Caco-2 (cell line): ENCODE measurements at regions of chr10 and their contacts with region 1.

Region 1: DNA sequence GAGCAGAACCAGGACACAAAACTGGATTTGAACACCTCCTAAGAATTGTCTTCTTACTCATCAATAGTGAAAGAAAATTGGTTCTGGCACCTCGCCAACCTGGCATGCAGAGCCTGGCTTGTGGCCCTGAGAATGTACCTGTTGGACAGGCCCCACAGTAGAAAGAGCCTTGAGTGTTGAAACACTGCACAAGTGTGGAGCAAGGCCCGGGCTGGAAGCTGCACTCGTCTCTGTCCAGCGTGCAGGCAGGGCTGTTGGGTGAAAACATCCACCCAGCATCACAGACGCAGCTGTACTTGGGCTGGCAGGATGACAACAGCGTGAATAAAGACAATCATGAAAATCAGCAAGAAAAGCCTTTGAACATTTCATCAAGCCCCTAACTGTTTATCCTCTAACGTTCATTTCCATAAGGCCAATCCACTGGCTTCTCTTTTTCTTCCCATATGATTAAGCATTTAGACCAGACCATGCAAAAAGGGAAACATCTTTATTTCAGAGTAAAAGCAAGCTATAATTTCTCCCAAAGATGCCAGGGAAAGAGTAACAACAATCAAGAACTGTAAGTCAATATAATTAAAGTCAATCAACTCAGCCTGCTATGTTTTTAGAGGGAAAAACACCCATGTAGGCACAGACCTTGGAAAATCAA is 15.6 kb downstream of the CUBN start:
- DNase-seq: peak in 1 of 2 experiments; percentile 18
- H3K4me3 ChIP-seq: no peak overlapping the region
- H3K4me3 Mint-ChIP-seq: no peak overlapping the region
- H3K27ac Mint-ChIP-seq: peak overlapping the region; percentile 48
- H3K4me1 ChIP-seq: peaks cover 43% of the 10 kb centered on the region
- H3K4me1 Mint-ChIP-seq: peaks cover 32% of the 10 kb centered on the region
- H3K27me3 ChIP-seq: no peaks in the 10 kb centered on the region
- H3K27me3 Mint-ChIP-seq: no peaks in the 10 kb centered on the region
- CTCF ChIP-seq: no peak

Region 2: GRCh38 chr10:16891375-16892313 is 222.4 kb before region 1 on chr10:
- CTCF ChIA-PET with region 1: no interaction called
- POLR2A ChIA-PET with region 1: no interaction called
- intact Hi-C with region 1: loop called (anchors 5 kb)
- DNase-seq: peak; percentile 56 to 66
- H3K4me3 ChIP-seq: no peak overlapping the region
- H3K4me3 Mint-ChIP-seq: peak overlapping the region; percentile 60
- H3K27ac Mint-ChIP-seq: peak overlapping the region; percentile 86
- H3K4me1 ChIP-seq: no peaks in the 10 kb centered on the region
- H3K4me1 Mint-ChIP-seq: peaks cover 7% of the 10 kb centered on the region
- H3K27me3 ChIP-seq: no peaks in the 10 kb centered on the region
- H3K27me3 Mint-ChIP-seq: peaks cover 9% of the 10 kb centered on the region
- CTCF ChIP-seq: peak; percentile 26 to 73

Region 3: DNA sequence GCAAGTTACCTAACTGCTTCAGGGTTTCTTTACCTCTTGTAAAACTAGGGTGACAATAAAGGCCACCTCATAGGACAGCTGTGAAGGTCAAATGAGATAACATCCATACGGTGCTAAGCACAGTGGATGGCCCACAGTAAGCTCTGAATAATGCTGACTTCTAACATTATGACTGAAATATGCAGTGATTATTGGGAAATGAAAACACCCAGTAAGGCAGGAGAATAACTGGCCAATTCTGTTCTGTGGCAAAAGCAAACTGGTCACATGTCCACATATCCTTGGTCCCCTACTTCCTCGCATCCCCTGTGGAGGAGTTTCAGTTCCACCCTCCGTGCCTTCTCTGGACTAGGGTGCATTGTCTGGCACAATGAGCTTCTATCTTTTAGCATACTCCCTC is 14.2 kb after region 1 on chr10:
- CTCF ChIA-PET with region 1: interaction called, 3 read pairs
- POLR2A ChIA-PET with region 1: no interaction called
- intact Hi-C with region 1: loop called (anchors 1 kb)
- DNase-seq: no peak
- H3K4me3 ChIP-seq: 0 out of 2 replicates have a peak overlapping the region, but pooled peaks have one; percentile 1
- H3K4me3 Mint-ChIP-seq: no peak overlapping the region
- H3K27ac Mint-ChIP-seq: no peak overlapping the region
- H3K4me1 ChIP-seq: peaks cover 60% of the 10 kb centered on the region
- H3K4me1 Mint-ChIP-seq: peaks cover 47% of the 10 kb centered on the region
- H3K27me3 ChIP-seq: no peaks in the 10 kb centered on the region
- H3K27me3 Mint-ChIP-seq: no peaks in the 10 kb centered on the region
- CTCF ChIP-seq: no peak

Region 4: DNA sequence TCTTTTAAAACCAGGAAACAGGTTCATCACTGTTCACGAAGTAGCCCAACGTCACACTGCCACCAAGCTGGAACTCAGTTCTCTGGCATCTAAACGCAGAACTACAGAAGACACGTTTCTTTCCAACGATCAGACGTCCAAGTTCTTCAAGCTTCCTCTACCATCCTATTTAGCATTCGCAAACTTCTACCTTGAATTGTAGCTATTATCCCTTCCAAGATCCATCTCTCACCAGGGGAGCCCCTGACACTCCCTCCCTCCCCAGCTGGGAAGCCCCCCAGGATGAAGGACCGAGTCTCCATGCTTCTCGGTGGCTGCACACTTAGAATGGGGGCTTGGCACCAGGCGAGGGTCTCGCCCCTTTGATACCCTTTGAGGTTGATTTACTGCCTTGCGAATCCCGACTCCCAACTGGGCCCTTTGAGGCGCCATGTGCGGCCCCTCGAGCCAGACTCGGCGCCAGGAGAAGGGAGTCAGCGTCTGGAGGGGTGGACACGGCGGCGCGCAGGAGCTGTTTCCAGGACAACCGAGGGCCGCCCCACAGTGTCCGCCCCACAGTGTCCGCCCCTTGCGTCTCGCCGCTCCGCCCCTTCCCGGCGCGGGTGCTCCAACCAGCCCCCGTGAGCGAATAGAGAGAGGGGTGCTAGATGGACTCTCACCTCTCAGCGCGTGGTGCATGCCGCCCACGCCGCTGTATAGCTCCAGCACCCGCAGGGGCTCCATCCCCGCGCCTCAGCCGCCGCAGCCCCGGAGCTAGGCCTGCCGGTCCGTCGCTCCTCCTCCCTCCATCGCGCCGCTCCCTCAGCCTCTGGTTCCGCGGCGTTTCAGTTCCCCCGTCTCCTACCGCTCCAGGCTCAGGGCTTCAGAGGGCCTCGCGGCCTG is 87.1 kb after region 1 on chr10 and contains the start of gene TRDMT1:
- CTCF ChIA-PET with region 1: interaction called, 5 read pairs
- POLR2A ChIA-PET with region 1: no interaction called
- intact Hi-C with region 1: loop called (anchors 1 kb)
- DNase-seq: peak; percentile 92 to 93
- H3K4me3 ChIP-seq: peak within 1 kb of the TSS; percentile 59
- H3K4me3 Mint-ChIP-seq: peak within 1 kb of the TSS; percentile 99
- H3K27ac Mint-ChIP-seq: peak within 1 kb of the TSS; percentile 98
- H3K4me1 ChIP-seq: peaks cover 20% of the 10 kb centered on the region
- H3K4me1 Mint-ChIP-seq: peaks cover 36% of the 10 kb centered on the region
- H3K27me3 ChIP-seq: no peaks in the 10 kb centered on the region
- H3K27me3 Mint-ChIP-seq: no peaks in the 10 kb centered on the region
- CTCF ChIP-seq: peak in 1 of 2 experiments; percentile 6
- total RNA-seq, gene TRDMT1: 8.6 and 11.0 TPM in 2 replicates

Region 5: DNA sequence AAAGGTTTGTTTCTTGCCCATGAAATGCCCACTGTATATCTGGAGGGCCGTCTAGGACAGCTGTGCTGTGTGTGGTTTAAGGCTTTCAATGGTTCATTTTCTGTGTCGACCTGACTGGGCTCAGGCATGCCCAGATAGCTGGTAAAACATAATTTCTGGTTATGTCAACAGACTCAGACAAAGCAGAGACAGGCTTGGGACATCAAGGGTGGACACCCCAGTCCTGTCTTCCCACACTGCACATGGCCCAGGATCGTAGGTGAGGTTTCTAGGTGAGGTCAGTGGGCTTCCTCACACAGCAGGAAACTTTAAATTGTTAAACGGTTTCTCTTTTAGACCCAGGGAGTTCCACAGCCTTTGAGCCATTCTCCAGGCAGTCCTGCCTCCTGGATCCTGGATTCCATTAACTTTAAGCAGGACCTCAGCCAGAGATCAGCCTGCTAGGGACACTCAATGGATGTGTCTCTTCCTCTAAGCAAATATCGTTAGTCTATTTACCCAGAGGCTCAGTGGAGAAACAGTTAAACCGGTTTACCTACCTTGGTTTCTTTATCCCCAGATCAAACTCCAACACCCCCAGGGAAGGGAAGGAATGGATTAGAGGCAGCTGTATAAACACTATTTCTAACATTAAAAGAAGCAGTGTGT is 274.0 kb after region 1 on chr10:
- CTCF ChIA-PET with region 1: no interaction called
- POLR2A ChIA-PET with region 1: no interaction called
- intact Hi-C with region 1: loop called (anchors 2 kb)
- DNase-seq: peak; percentile 92 to 96
- H3K4me3 ChIP-seq: no peak overlapping the region; the same call in 1 of the 2 replicates
- H3K4me3 Mint-ChIP-seq: peak overlapping the region; percentile 57
- H3K27ac Mint-ChIP-seq: peak overlapping the region; percentile 48
- H3K4me1 ChIP-seq: peaks cover 34% of the 10 kb centered on the region
- H3K4me1 Mint-ChIP-seq: peaks cover 25% of the 10 kb centered on the region
- H3K27me3 ChIP-seq: no peaks in the 10 kb centered on the region
- H3K27me3 Mint-ChIP-seq: no peaks in the 10 kb centered on the region
- CTCF ChIP-seq: no peak